Left ventricle myocardium superior (tissue), 1 donor: ENCODE measurements at regions of chr20 and their contacts with region 1.

Region 1: GRCh38 chr20:8853805-8854338 is 215.0 kb upstream of the PLCB4 start:
- DNase-seq: no peak
- ATAC-seq: peak; percentile 84

Region 2: DNA sequence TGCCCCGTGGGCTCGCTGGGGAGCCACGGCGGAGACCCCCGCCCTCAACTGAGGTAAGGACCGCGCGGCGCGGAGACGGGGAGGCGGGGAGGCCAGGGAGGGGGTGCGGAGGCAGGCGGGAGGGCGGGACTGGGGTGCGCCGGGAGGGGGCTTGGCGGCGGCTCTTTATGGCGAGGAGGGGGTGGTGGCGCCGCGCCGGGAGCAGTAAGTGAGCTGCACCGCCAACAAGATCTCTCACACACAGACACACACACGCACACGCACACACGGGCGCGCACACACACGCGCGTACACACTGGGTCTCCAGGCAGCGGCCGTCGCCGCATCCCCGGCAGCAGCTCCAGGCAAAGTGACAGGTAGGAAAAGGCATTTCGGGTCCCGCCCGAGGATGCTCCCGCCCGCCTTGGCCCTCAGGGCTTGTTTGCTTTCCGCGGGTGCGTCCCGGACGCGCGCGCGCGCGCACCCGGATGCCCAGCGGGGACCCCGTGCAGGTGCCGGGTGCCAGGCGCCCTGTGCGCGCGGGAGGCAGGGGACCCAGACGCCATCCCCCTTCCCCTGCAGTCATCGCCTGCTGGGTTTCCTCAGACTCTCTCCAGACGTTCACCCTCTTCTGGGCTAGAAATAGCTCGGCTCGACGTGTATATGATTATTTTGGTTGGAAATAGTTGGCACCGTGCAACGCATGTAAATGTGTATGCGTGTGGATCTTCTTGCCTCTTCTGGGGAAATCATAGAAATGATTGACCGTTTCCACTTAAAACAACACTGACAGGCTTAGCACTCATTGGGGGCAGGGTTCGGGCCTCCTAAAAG is 215.2 kb after region 1 on chr20 and contains the start of gene PLCB4:
- intact Hi-C with region 1: loop called (anchors 10 kb)
- DNase-seq: peak; percentile 73
- ATAC-seq: peak; percentile 33
- total RNA-seq, gene PLCB4: 29.1 TPM